Spleen (tissue), 13 donors: ENCODE measurements at regions of chr19 and their contacts with region 1.

Region 1: GRCh38 chr19:35931161-35931873 is 4.9 kb upstream of the LRFN3 start:
- DNase-seq: peak; percentile 100
- H3K4me3 ChIP-seq: peak overlapping the region in 5 of 8 donors; percentile 9 to 58 (median 26)
- H3K27ac ChIP-seq: peak overlapping the region; percentile 39 to 93 (median 88)
- H3K4me1 ChIP-seq: peaks cover 19 to 69% (median 44%) of the 10 kb centered on the region in 6 donors
- H3K27me3 ChIP-seq: peaks cover 0 to 15% (median 0%) of the 10 kb centered on the region in 7 donors
- CTCF ChIP-seq: peak; percentile 85 to 100 (median 95)
- POLR2A ChIP-seq: peak; percentile 52 to 88 (median 87)

Region 2: GRCh38 chr19:35693830-35694599 is 237.3 kb before region 1 on chr19:
- intact Hi-C with region 1: no loop called
- DNase-seq: peak; percentile 93
- H3K4me3 ChIP-seq: no peak overlapping the region
- H3K27ac ChIP-seq: peak overlapping the region in 2 of 8 donors; percentile 10 to 40
- H3K4me1 ChIP-seq: peaks cover 0 to 4% (median 0%) of the 10 kb centered on the region in 6 donors
- H3K27me3 ChIP-seq: peaks cover 0 to 4% (median 0%) of the 10 kb centered on the region in 7 donors
- CTCF ChIP-seq: peak; percentile 92 to 99 (median 97)
- POLR2A ChIP-seq: no peak

Region 3: GRCh38 chr19:35783469-35784434 is 147.6 kb before region 1 on chr19:
- intact Hi-C with region 1: no loop called
- DNase-seq: no peak
- H3K4me3 ChIP-seq: no peak overlapping the region
- H3K27ac ChIP-seq: no peak overlapping the region
- H3K4me1 ChIP-seq: no peaks in the 10 kb centered on the region
- H3K27me3 ChIP-seq: no peaks in the 10 kb centered on the region
- CTCF ChIP-seq: no peak
- POLR2A ChIP-seq: no peak

Region 4: DNA sequence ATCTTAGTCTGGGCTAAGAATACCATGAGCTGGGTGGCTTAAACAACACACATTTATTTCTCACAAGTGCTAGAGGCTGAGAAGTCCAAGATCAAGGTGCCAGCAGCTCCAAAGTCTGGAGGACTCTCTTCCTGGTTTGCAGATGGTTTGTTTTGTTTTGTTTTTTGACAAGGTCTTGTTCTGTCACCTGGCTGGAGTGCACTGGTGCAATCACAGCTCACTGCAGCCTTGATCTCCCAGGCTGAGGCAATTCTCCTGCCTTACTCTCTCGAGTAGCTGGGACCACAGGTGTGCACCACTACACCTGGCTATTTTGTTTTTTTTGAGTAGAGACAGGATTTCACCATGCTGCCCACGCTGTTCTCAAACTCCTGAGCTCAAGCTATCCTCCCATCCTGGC is 47.4 kb before region 1 on chr19:
- intact Hi-C with region 1: loop called (anchors 2 kb)
- DNase-seq: no peak
- H3K4me3 ChIP-seq: no peak overlapping the region
- H3K27ac ChIP-seq: no peak overlapping the region
- H3K4me1 ChIP-seq: peaks cover 0 to 15% (median 2%) of the 10 kb centered on the region in 6 donors
- H3K27me3 ChIP-seq: peaks cover 0 to 22% (median 11%) of the 10 kb centered on the region in 7 donors
- CTCF ChIP-seq: no peak
- POLR2A ChIP-seq: no peak